Dorsolateral prefrontal cortex (tissue), 120 donors: ENCODE measurements at regions of chr14 and their contacts with region 1.

Region 1: DNA sequence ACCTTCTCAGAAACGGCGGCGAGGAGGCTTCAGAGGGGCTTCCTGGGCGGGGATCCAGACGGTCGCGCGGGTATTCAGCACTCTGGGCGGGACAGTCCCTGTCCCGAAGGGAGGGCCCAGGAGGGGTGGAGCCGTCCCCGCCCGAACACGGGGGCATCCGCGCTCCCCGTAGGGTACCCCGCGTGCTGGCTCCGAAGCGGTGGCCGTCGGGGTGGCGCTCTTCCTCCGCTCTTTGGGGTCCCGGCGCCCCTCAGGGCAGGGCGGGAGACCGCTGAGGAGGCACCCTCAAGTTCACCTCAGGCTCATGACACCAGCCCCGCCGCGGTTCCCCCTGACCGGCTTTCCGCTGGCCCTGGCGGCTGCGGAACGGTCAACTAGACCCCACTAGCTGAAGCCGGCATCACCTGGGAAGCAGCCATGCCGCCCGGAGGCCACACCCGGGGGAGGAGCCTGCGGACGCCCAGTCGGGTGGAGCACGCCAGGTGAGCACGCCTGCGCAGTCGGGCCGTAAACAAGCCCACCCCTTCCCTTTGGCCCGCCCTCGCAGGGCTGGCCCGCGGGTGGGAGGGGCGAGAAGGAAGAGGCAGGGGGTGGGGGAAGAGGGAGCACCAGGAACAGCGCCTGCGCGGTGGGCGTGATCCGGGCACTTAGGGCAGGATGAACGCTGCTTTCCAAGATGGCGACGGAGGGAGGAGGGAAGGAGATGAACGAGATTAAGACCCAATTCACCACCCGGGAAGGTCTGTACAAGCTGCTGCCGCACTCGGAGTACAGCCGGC is at the start of gene WDR20:
- DNase-seq: peak; percentile 96 to 100 (median 98)
- H3K4me3 ChIP-seq: peak within 1 kb of the TSS; percentile 57 to 100 (median 99)
- H3K27ac ChIP-seq: peak within 1 kb of the TSS; percentile 70 to 100 (median 97)
- H3K27me3 ChIP-seq: no peaks in the 10 kb centered on the region
- CTCF ChIP-seq: peak in 19 of 56 donors; percentile 4 to 45 (median 20)
- total RNA-seq, gene WDR20: 35.1 to 88.2 (median 50.0) TPM

Region 2: DNA sequence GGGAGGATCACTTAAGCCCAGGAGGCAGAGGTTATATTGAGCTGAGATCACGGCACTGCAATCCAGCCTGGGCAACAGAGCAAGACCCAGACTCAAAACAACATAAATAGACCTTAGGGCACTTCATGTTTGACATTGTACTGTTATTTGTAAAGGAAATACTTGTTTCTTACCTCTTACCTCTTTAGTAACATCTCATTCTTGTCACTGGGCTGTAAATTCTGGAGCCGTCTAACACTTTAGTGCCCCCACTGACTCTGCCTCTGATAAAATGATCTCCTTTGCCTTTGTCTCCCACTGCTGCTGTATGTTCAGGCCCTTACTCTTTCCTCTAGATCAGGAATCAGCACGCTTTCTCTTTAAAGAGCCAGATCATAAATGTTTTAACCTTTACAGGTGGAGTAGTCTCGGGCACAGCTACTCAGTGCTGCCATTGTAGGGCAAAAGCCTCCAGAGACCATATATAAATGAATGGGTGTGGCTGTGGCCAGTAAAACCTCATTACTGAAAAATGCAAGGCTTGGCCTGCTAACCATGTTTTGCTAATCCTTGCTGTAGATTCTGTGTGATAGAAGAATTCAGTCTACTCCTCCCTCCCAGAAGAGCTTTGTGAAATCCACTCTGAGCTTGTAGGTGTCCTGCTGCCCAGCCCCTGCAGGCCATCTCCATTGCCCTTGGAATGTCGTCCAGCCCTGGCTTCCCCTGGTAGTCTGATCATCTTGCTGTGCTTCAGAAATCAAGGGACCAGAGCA is 110.8 kb before region 1 on chr14:
- intact Hi-C with region 1: no loop called
- DNase-seq: no peak
- H3K4me3 ChIP-seq: no peak overlapping the region
- H3K27ac ChIP-seq: peak overlapping the region in 2 of 59 donors; percentile 13 to 33
- H3K27me3 ChIP-seq: no peaks in the 10 kb centered on the region
- CTCF ChIP-seq: no peak

Region 3: DNA sequence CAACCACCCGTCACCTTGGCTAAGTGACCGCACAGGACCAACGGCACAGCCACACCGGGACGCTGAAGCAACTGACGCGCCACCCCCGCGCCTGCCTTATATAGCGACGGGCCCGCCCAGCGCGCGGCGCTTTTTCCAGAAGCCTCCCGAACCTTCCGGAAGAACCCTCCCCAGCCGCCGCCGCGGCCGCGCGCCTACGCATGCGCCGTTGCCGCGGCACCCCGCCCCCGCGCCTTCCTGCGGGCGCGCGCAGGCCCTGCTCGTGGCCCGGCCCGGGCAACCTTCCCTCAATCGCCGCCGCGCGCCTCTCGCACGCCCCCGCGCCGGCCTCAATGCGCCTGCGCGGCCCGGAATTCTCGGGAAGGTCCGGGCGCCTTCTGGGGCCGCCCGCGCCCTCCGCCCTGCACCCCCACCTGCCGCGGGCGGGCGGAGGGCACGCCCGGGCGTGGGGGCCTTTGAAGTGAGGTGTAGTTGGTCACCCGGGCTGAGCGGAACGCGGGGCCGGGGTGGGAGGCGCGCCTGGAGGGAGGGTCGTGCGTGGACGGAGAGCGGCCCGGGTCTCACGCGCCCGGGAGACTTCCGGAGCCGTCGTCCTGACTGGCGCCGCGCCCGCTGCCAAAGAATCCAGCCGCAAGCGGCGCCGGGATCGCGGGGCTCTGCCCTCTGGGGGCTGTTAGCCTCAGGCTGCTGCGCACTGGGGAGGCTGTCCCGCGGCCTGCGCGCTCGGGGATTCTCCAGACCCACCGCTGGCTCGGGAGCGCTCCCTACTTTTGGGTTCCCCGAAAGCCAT is 52.3 kb before region 1 on chr14 and contains the start of gene HSP90AA1:
- intact Hi-C with region 1: loop called (anchors 1 kb)
- DNase-seq: peak; percentile 85 to 94 (median 90)
- H3K4me3 ChIP-seq: peak within 1 kb of the TSS; percentile 65 to 99 (median 85)
- H3K27ac ChIP-seq: peak within 1 kb of the TSS; percentile 99 to 100 (median 100)
- H3K27me3 ChIP-seq: no peaks in the 10 kb centered on the region
- CTCF ChIP-seq: peak in 47 of 56 donors; percentile 11 to 57 (median 41)
- total RNA-seq, gene HSP90AA1: 420 to 2,880 (median 848) TPM

Region 4: GRCh38 chr14:102209217-102209966 is 70.0 kb after region 1 on chr14:
- intact Hi-C with region 1: loop called (anchors 2 to 5 kb)
- DNase-seq: peak in 9 of 10 donors; percentile 51 to 81 (median 75)
- H3K4me3 ChIP-seq: no peak overlapping the region
- H3K27ac ChIP-seq: peak overlapping the region in 58 of 59 donors; percentile 27 to 100 (median 90)
- H3K27me3 ChIP-seq: no peaks in the 10 kb centered on the region
- CTCF ChIP-seq: peak in 52 of 56 donors; percentile 24 to 74 (median 50)

Region 5: DNA sequence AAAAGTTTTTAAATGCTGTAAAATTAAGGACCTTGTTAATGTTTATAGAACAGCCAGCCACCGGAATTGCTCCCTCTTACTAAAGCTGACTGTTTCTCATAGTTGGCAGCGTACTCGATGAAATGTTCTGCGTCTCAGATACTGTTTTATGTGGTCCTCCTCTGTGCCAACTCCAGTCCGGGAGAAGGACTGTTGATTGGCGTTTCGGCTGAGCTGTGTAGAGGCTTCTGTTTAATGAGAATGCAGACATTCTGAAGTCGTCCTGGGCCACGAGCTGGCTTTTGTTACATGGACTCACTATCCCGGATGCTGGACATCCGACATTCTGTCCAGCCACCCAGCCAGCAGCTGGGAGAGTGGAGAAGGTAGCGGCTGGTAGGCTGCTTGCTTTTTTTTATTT is 75.6 kb after region 1 on chr14:
- intact Hi-C with region 1: loop called in 1 of 2 experiments (anchors 5 kb)
- DNase-seq: peak in 9 of 10 donors; percentile 35 to 84 (median 69)
- H3K4me3 ChIP-seq: peak overlapping the region in 25 of 59 donors; percentile 1 to 44 (median 23)
- H3K27ac ChIP-seq: peak overlapping the region; percentile 41 to 100 (median 81)
- H3K27me3 ChIP-seq: no peaks in the 10 kb centered on the region
- CTCF ChIP-seq: peak in 9 of 56 donors; percentile 4 to 31 (median 16)